Naive thymus-derived CD4-positive, alpha-beta T cell (primary cell): ENCODE measurements at regions of chr1 and their contacts with region 1.

Region 1: GRCh38 chr1:11907275-11908094 is 18.7 kb downstream of the KIAA2013 start:
- DNase-seq: peak; percentile 69 to 96 (median 94)
- ATAC-seq: peak; percentile 75
- H3K4me3 ChIP-seq: peak overlapping the region; percentile 92
- H3K4me3 Mint-ChIP-seq: peak overlapping the region; percentile 92 to 97 (median 94)
- H3K27ac ChIP-seq: peak overlapping the region; percentile 99
- H3K27ac Mint-ChIP-seq: peak overlapping the region; percentile 99 to 100 (median 100)
- H3K4me1 ChIP-seq: peaks cover 19% of the 10 kb centered on the region in 2 donors
- H3K4me1 Mint-ChIP-seq: peaks cover 9 to 45% (median 34%) of the 10 kb centered on the region in 7 donors
- H3K27me3 ChIP-seq: peaks cover 0 to 4% of the 10 kb centered on the region in 2 donors
- H3K27me3 Mint-ChIP-seq: peaks cover 0 to 41% (median under 1%) of the 10 kb centered on the region in 5 donors

Region 2: DNA sequence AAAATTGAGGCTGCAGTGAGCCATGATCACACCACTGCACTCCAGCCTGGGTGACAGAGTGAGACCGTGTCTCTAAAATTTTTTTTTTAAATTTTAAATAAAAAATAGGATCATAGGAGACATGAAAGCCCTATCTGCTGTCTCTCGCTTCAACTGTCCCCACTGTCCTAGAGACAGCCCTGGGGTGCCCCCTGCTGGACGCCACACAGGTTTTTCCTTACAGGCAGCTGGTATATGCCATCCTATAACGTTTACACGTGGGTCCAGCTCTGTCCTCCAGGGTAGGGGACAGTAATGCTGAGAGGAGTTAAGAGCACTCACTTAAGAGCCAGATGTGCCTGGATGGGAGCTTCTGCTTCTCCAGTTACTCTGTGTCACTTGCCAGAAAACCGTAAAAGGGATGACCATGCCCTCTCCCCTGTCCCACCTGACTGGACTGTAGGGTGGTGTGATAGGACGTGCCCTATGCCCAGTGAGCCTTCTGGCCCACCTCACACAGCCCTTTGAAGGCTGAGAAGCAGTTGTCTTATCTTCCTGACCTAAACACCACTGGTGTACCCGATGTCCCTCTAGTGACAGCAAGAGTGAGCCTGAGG is 261.7 kb before region 1 on chr1:
- CTCF ChIA-PET with region 1: interaction called, 3 read pairs
- POLR2A ChIA-PET with region 1: no interaction called
- intact Hi-C with region 1: loop called (anchors 5 kb)
- DNase-seq: peak; percentile 60 to 81 (median 74)
- ATAC-seq: peak; percentile 68
- H3K4me3 ChIP-seq: no peak overlapping the region
- H3K4me3 Mint-ChIP-seq: no peak overlapping the region
- H3K27ac ChIP-seq: no peak overlapping the region
- H3K27ac Mint-ChIP-seq: no peak overlapping the region
- H3K4me1 ChIP-seq: peaks cover 2 to 15% of the 10 kb centered on the region in 2 donors
- H3K4me1 Mint-ChIP-seq: peaks cover 2 to 20% (median 12%) of the 10 kb centered on the region in 7 donors
- H3K27me3 ChIP-seq: no peaks in the 10 kb centered on the region
- H3K27me3 Mint-ChIP-seq: peaks cover 0 to 14% (median 0%) of the 10 kb centered on the region in 5 donors

Region 3: DNA sequence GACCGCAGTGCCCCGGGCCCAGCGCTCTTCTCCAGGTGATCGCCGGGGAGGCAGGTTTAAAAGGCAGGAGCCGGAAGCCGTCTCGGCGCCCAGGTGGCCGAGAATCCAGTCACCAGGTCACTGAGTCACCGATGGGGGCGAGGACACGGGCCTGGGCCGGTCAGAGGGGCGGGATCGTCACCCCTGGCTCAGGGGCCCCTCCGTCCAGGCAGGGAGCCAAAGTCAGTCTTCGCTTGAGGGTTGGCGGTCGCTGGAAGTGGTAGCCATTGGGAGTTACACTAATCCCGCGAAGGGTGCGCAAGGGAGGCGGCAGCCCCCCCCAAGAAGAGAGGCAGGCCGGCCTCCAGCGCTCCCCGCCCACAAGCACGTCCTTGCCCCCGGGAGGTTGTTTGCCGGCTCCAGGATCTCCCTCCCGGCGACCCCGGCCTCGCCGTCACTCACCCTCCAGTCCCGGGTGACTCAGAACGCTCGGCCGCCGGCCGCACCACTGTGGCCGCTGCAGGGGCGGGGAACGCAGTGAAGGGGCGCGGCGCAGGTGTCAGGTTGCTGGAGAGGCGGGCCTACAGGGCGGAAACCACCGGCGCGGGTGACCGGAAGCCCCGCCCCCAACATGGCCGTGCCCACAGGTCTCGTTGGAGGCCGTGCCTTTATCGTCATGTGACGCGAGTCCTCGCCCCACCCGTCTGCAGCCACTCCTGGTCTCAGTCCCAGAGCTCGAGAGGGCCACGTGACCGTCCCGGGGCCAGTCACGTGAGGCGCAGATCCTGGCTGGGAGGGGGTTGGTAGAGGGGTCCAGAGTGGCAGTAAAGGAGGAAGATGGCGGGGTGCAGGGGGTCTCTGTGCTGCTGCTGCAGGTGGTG is 101.8 kb before region 1 on chr1 and contains the starts of genes CLCN6 and MTHFR:
- CTCF ChIA-PET with region 1: no interaction called
- POLR2A ChIA-PET with region 1: interaction called, 56 read pairs
- intact Hi-C with region 1: loop called (anchors 1 kb)
- DNase-seq: peak; percentile 93 to 98 (median 97)
- ATAC-seq: peak; percentile 95
- H3K4me3 ChIP-seq: peak within 1 kb of the TSS; percentile 86
- H3K4me3 Mint-ChIP-seq: peak within 1 kb of the TSS; percentile 94 to 100 (median 98)
- H3K27ac ChIP-seq: peak within 1 kb of the TSS; percentile 92
- H3K27ac Mint-ChIP-seq: peak within 1 kb of the TSS; percentile 94 to 99 (median 96)
- H3K4me1 ChIP-seq: peaks cover 39 to 40% of the 10 kb centered on the region in 2 donors
- H3K4me1 Mint-ChIP-seq: peaks cover 37 to 72% (median 60%) of the 10 kb centered on the region in 7 donors
- H3K27me3 ChIP-seq: no peaks in the 10 kb centered on the region
- H3K27me3 Mint-ChIP-seq: no peaks in the 10 kb centered on the region
- total RNA-seq, gene CLCN6: 13.3 to 23.0 (median 20.9) TPM
- total RNA-seq, gene MTHFR: 31.0 to 64.4 (median 55.2) TPM

Region 4: DNA sequence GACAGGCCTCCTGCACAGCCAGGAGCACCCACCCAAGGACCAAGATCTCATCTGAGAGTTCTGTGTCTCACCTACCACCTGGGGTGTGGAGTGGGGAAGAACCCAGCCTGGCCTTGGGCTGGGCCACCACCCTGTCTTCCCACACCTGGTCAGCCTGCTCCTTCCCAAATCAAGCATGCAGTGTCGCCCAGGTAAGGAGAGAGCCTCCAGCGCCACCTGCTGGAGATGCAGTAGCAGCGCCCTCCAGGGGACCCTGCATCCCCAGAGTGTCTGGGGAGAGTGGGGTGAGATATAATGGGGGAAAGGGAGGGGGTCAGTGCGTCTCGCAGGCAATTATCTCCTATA is 13.6 kb before region 1 on chr1:
- CTCF ChIA-PET with region 1: no interaction called
- POLR2A ChIA-PET with region 1: interaction called, 14 read pairs
- intact Hi-C with region 1: loop called in 1 of 2 experiments (anchors 1 kb)
- DNase-seq: peak; percentile 41 to 77 (median 61)
- ATAC-seq: peak; percentile 91
- H3K4me3 ChIP-seq: no peak overlapping the region
- H3K4me3 Mint-ChIP-seq: peak overlapping the region in 1 of 10 donors; percentile 2
- H3K27ac ChIP-seq: no peak overlapping the region
- H3K27ac Mint-ChIP-seq: peak overlapping the region in 2 of 9 donors; percentile 25 to 54
- H3K4me1 ChIP-seq: no peaks in the 10 kb centered on the region
- H3K4me1 Mint-ChIP-seq: peaks cover 0 to 4% (median 0%) of the 10 kb centered on the region in 7 donors
- H3K27me3 ChIP-seq: peaks cover 0 to 4% of the 10 kb centered on the region in 2 donors
- H3K27me3 Mint-ChIP-seq: peaks cover 20 to 49% (median 31%) of the 10 kb centered on the region in 5 donors

Region 5: GRCh38 chr1:11934302-11935056 is 27.0 kb after region 1 on chr1 and contains the start of gene PLOD1:
- CTCF ChIA-PET with region 1: no interaction called
- POLR2A ChIA-PET with region 1: interaction called, 18 read pairs
- intact Hi-C with region 1: loop called (anchors 1 kb)
- DNase-seq: peak; percentile 50 to 83 (median 67)
- ATAC-seq: peak; percentile 100
- H3K4me3 ChIP-seq: peak within 1 kb of the TSS; percentile 68
- H3K4me3 Mint-ChIP-seq: peak within 1 kb of the TSS; percentile 77 to 87 (median 82)
- H3K27ac ChIP-seq: peak within 1 kb of the TSS; percentile 54
- H3K27ac Mint-ChIP-seq: peak within 1 kb of the TSS in 4 of 9 donors; percentile 45 to 59 (median 52)
- H3K4me1 ChIP-seq: peaks cover 3 to 7% of the 10 kb centered on the region in 2 donors
- H3K4me1 Mint-ChIP-seq: peaks cover 0 to 18% (median 0%) of the 10 kb centered on the region in 7 donors
- H3K27me3 ChIP-seq: no peaks in the 10 kb centered on the region
- H3K27me3 Mint-ChIP-seq: no peaks in the 10 kb centered on the region
- total RNA-seq, gene PLOD1: 3.6 to 24.2 (median 4.8) TPM

Region 6: DNA sequence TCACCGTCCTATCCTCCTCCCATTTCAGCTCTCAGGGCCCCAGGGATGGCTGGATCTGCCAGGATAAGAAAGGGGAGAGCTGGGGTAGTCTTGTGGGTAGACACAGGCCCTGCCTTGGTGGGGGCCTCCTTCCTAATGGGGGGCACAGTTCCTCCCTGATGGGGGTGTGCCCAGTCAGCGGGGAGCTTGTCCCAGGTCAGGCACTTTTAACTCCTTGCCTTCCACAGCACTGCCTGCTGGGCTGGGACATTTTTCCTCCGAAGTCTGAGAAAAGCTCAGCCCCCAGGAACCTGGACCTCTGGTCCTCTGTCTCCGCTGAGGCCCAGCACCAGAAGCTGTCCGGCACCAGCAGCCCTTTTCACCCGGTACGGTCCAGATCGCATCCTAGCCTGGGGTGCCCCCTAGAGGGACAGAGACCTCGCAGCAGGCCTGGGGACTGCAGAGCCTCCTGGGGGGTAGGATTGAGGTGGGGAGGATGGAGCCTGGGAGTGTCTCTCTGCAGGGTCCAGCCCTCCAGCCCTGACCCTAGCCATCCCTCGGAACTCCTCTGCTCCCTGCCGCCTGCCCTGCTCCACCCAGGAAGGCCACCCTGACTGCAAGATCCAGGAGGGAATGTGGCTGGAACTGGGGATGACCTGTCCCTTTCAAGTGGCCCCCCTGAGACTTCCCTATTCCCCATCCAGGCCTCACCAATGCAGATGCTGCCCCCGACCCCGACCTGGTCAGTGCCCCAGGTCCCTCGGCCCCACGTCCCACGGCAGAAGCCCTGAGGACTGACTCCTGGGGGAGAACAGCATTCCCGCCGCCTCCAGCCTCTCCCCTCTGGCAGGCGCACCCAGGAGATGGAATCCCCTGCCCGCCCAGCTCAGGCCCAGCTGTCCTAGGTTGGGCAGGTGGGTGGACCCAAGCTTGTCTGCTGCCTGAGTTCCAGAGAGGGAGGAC is 123.8 kb after region 1 on chr1:
- CTCF ChIA-PET with region 1: no interaction called
- POLR2A ChIA-PET with region 1: interaction called, 3 read pairs
- intact Hi-C with region 1: loop called in 1 of 2 experiments (anchors 2 kb)
- DNase-seq: peak in 4 of 9 donors; percentile 16 to 51 (median 24)
- ATAC-seq: peak; percentile 57
- H3K4me3 ChIP-seq: no peak overlapping the region
- H3K4me3 Mint-ChIP-seq: no peak overlapping the region
- H3K27ac ChIP-seq: no peak overlapping the region
- H3K27ac Mint-ChIP-seq: no peak overlapping the region
- H3K4me1 ChIP-seq: no peaks in the 10 kb centered on the region
- H3K4me1 Mint-ChIP-seq: peaks cover 0 to 13% (median 0%) of the 10 kb centered on the region in 7 donors
- H3K27me3 ChIP-seq: no peaks in the 10 kb centered on the region
- H3K27me3 Mint-ChIP-seq: no peaks in the 10 kb centered on the region

Region 7: GRCh38 chr1:12255918-12256317 is 348.4 kb after region 1 on chr1:
- CTCF ChIA-PET with region 1: no interaction called
- POLR2A ChIA-PET with region 1: no interaction called
- intact Hi-C with region 1: no loop called
- DNase-seq: no peak
- ATAC-seq: no peak
- H3K4me3 ChIP-seq: no peak overlapping the region
- H3K4me3 Mint-ChIP-seq: no peak overlapping the region
- H3K27ac ChIP-seq: no peak overlapping the region
- H3K27ac Mint-ChIP-seq: no peak overlapping the region
- H3K4me1 ChIP-seq: no peaks in the 10 kb centered on the region
- H3K4me1 Mint-ChIP-seq: no peaks in the 10 kb centered on the region
- H3K27me3 ChIP-seq: no peaks in the 10 kb centered on the region
- H3K27me3 Mint-ChIP-seq: no peaks in the 10 kb centered on the region